ENCODE measurements at regions of chr16 and their contacts with region 1.

Region 1: DNA sequence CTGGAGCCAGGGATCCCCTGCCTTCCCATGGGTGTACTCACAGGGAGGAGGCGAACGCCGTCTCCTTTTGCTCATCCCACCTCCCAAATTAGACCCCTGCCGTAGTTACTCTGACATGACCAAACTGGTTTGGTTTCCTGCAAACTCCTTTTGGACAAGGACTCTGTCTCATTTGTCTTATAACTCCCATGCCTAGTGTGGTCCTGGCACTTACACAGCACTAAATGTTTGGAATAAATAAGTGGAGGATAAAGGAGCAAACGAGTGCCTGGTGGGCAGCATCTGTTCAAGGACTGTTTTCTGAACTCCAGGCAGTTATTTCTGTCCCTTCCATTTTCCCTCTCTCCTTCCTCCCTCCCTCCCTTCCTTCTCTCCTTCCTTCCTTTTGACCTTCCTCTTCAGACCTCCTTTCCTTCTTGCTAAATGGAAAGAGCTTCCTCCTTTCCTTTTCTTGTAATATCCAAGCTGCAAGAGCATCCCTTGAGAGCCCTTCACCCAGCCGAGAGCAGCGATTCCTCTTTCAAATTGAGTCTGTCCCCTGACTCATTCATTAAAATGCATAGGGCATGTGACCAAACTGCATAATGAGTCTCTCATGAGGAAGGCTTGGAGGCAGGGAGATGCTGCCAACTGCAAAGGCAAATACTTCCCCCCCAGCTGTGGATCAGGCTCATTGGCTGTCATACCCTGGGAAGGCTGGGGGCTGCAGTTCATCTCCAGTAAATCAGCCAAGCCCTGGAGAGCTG is 36.8 kb downstream of the CHD9 start:
- DNase-seq: peak; percentile 92

Region 2: GRCh38 chr16:53123747-53124146 is 32.1 kb after region 1 on chr16:
- intact Hi-C with region 1: loop called in 1 of 2 experiments (anchors 1 kb)
- DNase-seq: no peak

Region 3: GRCh38 chr16:53482123-53482522 is 390.5 kb after region 1 on chr16:
- intact Hi-C with region 1: no loop called
- DNase-seq: no peak